PC-3 (cell line): ENCODE measurements at regions of chr3 and their contacts with region 1.

Region 1: GRCh38 chr3:105366326-105367062 is at the start of gene ALCAM:
- DNase-seq: peak; percentile 99
- ATAC-seq: peak; percentile 72
- H3K4me3 ChIP-seq: peak within 1 kb of the TSS; percentile 83
- H3K27ac ChIP-seq: peak within 1 kb of the TSS; percentile 96
- H3K4me1 ChIP-seq: peaks cover 49% of the 10 kb centered on the region
- H3K27me3 ChIP-seq: no peaks in the 10 kb centered on the region
- CTCF ChIP-seq: peak; percentile 76
- total RNA-seq, gene ALCAM: 168 and 169 TPM in 2 replicates

Region 2: DNA sequence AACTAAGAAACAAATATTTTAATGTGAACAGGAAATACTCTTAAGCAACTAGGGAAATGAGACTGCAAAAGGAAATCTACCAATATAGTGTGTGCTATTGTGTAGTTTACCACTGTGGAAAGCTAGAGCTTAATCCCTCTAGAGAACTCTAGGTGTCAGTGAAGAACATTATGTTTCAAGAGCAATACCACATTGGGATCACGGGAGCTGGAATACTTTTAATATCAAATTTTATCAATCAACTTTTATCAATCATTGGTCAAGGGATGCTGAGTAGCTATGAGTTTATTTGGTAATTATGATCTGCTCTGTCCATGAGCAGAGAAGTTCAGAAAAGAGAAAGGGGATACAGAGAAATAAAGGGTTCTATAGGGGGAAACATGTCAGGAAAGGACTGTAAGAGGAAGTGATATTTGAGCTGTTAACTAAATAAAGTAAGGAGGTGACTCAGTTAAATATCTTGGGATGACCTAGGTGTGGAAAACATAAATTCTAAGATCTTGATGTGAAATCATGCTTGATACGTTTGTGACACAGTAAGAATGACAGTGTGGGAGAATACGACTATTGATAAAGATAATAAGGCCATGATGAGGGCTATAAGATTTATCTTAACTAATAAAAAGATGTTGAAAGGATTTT is 762.0 kb before region 1 on chr3:
- CTCF ChIA-PET with region 1: interaction called, 10 read pairs
- POLR2A ChIA-PET with region 1: interaction called, 5 read pairs
- intact Hi-C with region 1: no loop called
- DNase-seq: peak; percentile 74
- ATAC-seq: peak; percentile 98
- H3K4me3 ChIP-seq: peak overlapping the region; percentile 41
- H3K27ac ChIP-seq: peak overlapping the region; percentile 49
- H3K4me1 ChIP-seq: peaks cover 15% of the 10 kb centered on the region
- H3K27me3 ChIP-seq: no peaks in the 10 kb centered on the region
- CTCF ChIP-seq: peak; percentile 79

Region 3: DNA sequence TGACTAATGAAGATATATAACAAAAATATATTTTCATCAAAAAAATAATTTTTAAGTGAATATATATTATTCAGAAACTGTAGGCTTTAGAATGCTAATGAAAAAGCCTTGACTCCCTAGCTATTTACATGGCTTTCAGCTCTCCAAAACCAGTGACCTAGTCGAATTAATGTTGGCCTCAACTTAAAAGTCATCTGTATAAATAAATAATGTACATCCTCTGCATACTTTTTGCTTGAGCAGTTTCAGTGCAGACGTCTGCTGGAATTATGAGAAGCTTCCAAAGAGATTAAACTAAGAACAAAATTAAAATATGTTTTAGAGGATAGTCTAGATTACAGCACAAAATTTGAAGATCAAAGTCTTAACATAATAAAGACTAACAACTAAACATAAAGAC is 520.2 kb before region 1 on chr3:
- CTCF ChIA-PET with region 1: no interaction called
- POLR2A ChIA-PET with region 1: no interaction called
- intact Hi-C with region 1: no loop called
- DNase-seq: no peak
- ATAC-seq: no peak
- H3K4me3 ChIP-seq: no peak overlapping the region
- H3K27ac ChIP-seq: no peak overlapping the region
- H3K4me1 ChIP-seq: no peaks in the 10 kb centered on the region
- H3K27me3 ChIP-seq: no peaks in the 10 kb centered on the region
- CTCF ChIP-seq: no peak

Region 4: GRCh38 chr3:104909198-104909597 is 457.3 kb before region 1 on chr3:
- CTCF ChIA-PET with region 1: no interaction called
- POLR2A ChIA-PET with region 1: interaction called, 7 read pairs
- intact Hi-C with region 1: loop called (anchors 1 kb)
- DNase-seq: peak; percentile 81
- ATAC-seq: peak; percentile 88
- H3K4me3 ChIP-seq: peak overlapping the region; percentile 4; the same call in 1 of the 2 replicates
- H3K27ac ChIP-seq: peak overlapping the region; percentile 78
- H3K4me1 ChIP-seq: peaks cover 30% of the 10 kb centered on the region
- H3K27me3 ChIP-seq: no peaks in the 10 kb centered on the region
- CTCF ChIP-seq: no peak

Region 5: DNA sequence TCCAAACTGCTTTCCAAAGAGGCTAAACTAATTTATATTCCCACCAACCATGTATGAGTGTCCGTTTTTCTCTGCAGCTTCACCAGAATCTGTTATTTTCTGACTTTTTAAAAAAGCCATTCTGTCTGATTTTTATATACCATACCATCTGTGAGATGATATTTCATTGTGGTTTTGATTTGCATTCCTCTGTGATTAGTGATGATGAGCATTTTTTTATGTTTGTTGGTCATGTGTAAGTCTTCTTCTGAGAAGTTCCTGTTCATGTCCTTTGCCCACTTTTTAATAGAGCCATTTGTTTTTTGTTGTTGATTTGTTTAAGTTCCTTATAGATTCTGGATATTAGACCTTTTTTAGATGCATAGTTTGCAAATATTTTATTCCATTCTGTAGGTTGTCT is 179.2 kb before region 1 on chr3:
- CTCF ChIA-PET with region 1: no interaction called
- POLR2A ChIA-PET with region 1: no interaction called
- intact Hi-C with region 1: loop called (anchors 10 kb)
- DNase-seq: peak; percentile 67
- ATAC-seq: peak; percentile 79
- H3K4me3 ChIP-seq: no peak overlapping the region
- H3K27ac ChIP-seq: no peak overlapping the region
- H3K4me1 ChIP-seq: no peaks in the 10 kb centered on the region
- H3K27me3 ChIP-seq: no peaks in the 10 kb centered on the region
- CTCF ChIP-seq: no peak

Region 6: GRCh38 chr3:105327662-105328337 is 38.7 kb before region 1 on chr3:
- CTCF ChIA-PET with region 1: no interaction called
- POLR2A ChIA-PET with region 1: no interaction called
- intact Hi-C with region 1: loop called (anchors 1 kb)
- DNase-seq: peak; percentile 83
- ATAC-seq: peak; percentile 96
- H3K4me3 ChIP-seq: no peak overlapping the region
- H3K27ac ChIP-seq: peak overlapping the region; percentile 66
- H3K4me1 ChIP-seq: peaks cover 18% of the 10 kb centered on the region
- H3K27me3 ChIP-seq: no peaks in the 10 kb centered on the region
- CTCF ChIP-seq: no peak

Region 7: DNA sequence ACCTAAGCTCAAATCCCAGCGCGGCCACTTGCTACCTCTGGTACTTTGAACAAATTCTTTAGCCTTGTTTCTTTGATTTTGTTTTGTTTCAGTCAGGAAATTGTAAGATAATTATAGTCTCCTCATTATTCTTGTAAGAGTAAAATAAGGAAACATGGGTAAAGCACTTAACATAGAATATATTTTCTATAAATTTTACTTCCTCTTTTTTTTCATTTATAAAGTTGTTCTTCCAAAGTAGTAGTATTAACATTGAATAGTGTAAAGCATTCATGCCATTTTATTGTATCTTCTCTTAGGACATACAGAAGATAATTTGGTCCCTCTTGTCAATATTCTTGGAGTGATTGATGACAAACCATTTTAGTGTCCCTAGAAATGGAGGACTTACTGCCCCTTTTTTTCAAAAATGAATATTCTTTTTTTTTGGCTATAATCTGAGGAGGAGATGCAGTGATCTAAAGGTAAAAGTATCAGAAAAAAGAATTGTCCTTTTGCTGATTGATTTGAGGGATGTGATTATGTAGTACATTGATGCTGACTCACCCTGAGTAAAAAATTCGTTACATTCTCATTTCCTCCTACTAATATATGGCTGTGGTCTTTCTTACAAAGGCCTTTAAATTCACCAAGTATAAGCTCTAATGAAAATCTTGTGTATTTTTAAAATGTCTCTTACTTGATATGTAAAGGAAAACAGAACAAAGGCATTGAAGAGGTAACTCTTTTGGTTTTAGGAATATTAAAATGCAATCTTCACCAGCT is 51.2 kb after region 1 on chr3:
- CTCF ChIA-PET with region 1: no interaction called
- POLR2A ChIA-PET with region 1: no interaction called
- intact Hi-C with region 1: no loop called
- DNase-seq: peak; percentile 52
- ATAC-seq: peak; percentile 69
- H3K4me3 ChIP-seq: no peak overlapping the region
- H3K27ac ChIP-seq: peak overlapping the region; percentile 10
- H3K4me1 ChIP-seq: peaks cover 20% of the 10 kb centered on the region
- H3K27me3 ChIP-seq: no peaks in the 10 kb centered on the region
- CTCF ChIP-seq: no peak

Region 8: DNA sequence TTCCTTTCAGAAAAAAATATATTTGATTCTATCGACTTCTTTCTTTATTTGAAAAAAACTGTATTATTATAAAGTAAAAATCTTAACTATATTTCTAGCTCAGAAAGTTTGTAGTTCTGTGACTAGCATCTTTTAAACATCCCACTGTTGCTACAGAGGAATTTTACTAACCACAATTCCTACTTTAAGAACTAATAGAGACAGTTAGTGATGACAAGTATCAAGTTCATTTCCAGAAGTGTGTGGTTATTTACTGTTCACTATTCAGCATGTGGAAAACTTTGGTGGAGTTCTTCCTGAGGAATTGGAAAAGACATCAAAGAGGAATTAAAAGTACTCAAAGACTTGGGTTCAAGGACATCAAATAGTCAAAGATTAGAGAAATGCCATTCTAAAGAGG is 1026.4 kb after region 1 on chr3:
- CTCF ChIA-PET with region 1: no interaction called
- POLR2A ChIA-PET with region 1: no interaction called
- intact Hi-C with region 1: no loop called
- DNase-seq: no peak
- ATAC-seq: no peak
- H3K4me3 ChIP-seq: no peak overlapping the region
- H3K27ac ChIP-seq: no peak overlapping the region
- H3K4me1 ChIP-seq: no peaks in the 10 kb centered on the region
- H3K27me3 ChIP-seq: no peaks in the 10 kb centered on the region
- CTCF ChIP-seq: no peak